ENCODE measurements at regions of chr10 and their contacts with region 1.

Region 1: DNA sequence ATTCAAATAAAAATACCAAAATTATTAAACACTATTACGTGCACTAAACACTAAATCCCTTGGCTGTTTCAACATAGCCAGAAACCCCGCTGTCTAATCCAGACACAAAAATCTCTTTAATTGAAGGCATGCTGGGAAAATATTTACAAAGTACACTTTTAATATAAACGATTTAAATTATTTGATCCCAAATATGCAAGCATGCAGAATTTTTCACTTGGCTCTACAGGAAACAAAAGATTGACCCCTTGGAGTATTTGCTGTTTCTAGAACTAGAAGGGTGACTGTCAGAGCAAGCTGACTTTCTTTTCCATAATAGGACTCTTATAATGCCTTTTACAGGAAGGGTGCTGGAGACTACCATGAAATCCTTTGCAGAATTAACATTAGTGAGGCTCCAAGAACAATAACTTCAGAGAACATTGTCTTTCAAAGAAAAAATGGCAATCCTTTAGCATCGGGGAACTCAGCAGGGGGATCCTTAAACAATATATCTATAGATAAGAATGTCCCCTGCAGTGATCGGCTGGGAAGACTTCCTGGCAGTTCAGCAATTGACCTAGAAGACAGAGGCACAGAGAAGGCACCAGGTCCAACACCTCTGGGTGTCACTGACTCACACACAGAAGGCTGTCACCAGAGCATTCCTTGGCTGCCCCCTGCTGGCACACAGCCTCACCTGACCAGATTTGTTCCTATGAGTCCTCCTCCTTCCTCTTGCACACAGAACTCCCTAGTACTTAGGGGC is 55.8 kb upstream of the MRLN start:
- DNase-seq: peak; percentile 81
- H3K4me3 Mint-ChIP-seq: no peak overlapping the region
- H3K27ac Mint-ChIP-seq: no peak overlapping the region
- H3K4me1 Mint-ChIP-seq: no peaks in the 10 kb centered on the region
- H3K27me3 Mint-ChIP-seq: no peaks in the 10 kb centered on the region

Region 2: GRCh38 chr10:59625721-59626522 is 183.1 kb before region 1 on chr10:
- CTCF ChIA-PET with region 1: interaction called, 32 read pairs
- DNase-seq: peak; percentile 53
- H3K4me3 Mint-ChIP-seq: no peak overlapping the region
- H3K27ac Mint-ChIP-seq: no peak overlapping the region
- H3K4me1 Mint-ChIP-seq: peaks cover 4% of the 10 kb centered on the region
- H3K27me3 Mint-ChIP-seq: peaks cover 8% of the 10 kb centered on the region